ENCODE measurements at regions of chr1 and their contacts with region 1.

Region 1: GRCh38 chr1:1040004-1040991 is 20.4 kb downstream of the AGRN start:
- DNase-seq: peak; percentile 90
- H3K4me3 Mint-ChIP-seq: peak overlapping the region; percentile 55
- H3K27ac Mint-ChIP-seq: no peak overlapping the region
- H3K4me1 Mint-ChIP-seq: peaks cover 15% of the 10 kb centered on the region
- H3K27me3 Mint-ChIP-seq: peaks cover 28% of the 10 kb centered on the region

Region 2: GRCh38 chr1:832136-832535 is 208.2 kb before region 1 on chr1:
- CTCF ChIA-PET with region 1: no interaction called
- POLR2A ChIA-PET with region 1: no interaction called
- intact Hi-C with region 1: no loop called
- DNase-seq: no peak
- H3K4me3 Mint-ChIP-seq: no peak overlapping the region
- H3K27ac Mint-ChIP-seq: no peak overlapping the region
- H3K4me1 Mint-ChIP-seq: peaks cover 17% of the 10 kb centered on the region
- H3K27me3 Mint-ChIP-seq: peaks cover 1% of the 10 kb centered on the region

Region 3: GRCh38 chr1:1098681-1099421 is 58.6 kb after region 1 on chr1:
- CTCF ChIA-PET with region 1: no interaction called
- POLR2A ChIA-PET with region 1: no interaction called
- intact Hi-C with region 1: loop called (anchors 2 kb)
- DNase-seq: peak; percentile 48
- H3K4me3 Mint-ChIP-seq: peak overlapping the region; percentile 9
- H3K27ac Mint-ChIP-seq: peak overlapping the region; percentile 97
- H3K4me1 Mint-ChIP-seq: peaks cover 47% of the 10 kb centered on the region
- H3K27me3 Mint-ChIP-seq: peaks cover 3% of the 10 kb centered on the region